ENCODE measurements at regions of chr16 and their contacts with region 1.

Region 1: DNA sequence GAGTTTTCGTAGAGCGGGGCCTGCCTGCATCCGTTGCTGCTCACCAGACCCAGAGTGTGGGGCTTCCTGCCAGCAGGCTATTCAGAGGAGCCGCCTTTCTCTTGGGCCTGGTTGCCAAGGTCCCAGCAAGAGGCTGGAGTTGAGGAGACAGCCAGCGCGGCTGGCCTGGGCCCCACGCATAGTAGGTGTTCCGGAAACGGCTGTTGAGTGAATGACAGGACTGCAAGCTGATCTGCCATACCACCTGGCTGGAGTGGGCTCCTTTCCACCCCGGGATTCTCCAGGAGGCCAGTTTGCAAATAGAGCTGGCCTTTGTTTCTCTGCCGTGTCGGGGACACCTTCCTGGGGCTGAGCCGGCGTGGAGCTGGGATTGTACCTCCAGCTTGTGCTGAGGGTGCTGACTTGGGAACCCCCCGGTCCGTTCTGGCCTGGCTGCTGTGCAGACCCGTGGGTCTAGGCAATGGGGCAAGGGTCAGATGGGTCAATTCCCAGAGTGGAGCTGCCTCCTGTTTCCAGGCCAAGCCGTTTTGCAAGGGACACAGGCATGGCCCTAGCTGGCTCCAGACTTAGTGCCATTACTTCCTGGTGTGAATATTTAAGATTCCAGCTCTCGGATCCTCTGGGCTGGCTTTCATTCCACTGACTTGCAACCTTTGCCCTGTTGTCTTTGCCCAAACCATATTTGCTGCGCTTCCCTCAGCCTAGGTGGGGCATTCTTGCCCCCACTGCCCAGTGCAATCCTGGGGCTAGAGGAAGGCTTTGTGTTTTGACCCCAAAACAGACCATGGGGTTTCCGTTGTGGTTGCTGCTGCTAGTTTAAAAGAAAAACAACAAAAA is 68.8 kb downstream of the CMIP start:
- DNase-seq: no peak
- ATAC-seq: no peak
- H3K4me3 ChIP-seq: no peak overlapping the region
- H3K4me3 Mint-ChIP-seq: no peak overlapping the region
- H3K27ac ChIP-seq: no peak overlapping the region
- H3K27ac Mint-ChIP-seq: peak overlapping the region; percentile 46
- H3K4me1 ChIP-seq: peaks cover 16% of the 10 kb centered on the region
- H3K4me1 Mint-ChIP-seq: no peaks in the 10 kb centered on the region
- H3K27me3 ChIP-seq: no peaks in the 10 kb centered on the region
- H3K27me3 Mint-ChIP-seq: no peaks in the 10 kb centered on the region
- CTCF ChIP-seq: no peak

Region 2: DNA sequence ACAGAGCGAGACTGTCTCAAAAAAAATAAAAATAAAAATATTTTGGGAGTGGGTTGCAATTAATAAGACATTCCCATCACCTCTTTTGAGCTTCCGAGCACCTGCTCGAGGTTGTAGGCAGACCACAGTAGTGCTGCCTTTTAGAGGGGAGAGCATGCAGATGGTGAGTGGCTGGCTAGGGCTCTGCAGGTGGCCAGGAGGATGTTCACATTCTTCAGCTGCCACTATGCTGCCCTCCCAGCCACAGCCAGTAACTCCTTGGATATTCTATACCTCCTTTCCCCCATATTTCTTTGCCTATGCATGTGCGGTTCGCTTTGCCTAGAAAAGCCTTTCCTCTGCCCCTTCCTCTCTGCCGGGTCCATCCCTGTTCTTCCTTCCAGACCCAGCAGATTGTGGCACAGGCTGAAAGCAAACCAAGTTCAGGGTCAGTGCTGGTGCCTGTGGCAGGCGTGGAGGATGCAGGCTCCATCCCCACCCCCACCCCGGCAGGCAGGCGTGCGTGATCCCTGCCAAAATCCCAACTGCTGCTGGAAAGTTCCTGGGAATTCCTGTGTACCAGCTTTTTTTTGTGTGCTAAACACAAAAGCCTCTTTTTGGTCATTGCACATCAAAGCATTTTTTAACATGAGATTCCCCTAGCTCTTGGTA is 102.7 kb before region 1 on chr16:
- CTCF ChIA-PET with region 1: no interaction called
- POLR2A ChIA-PET with region 1: no interaction called
- intact Hi-C with region 1: loop called in 1 of 2 experiments (anchors 5 kb)
- DNase-seq: no peak
- ATAC-seq: no peak
- H3K4me3 ChIP-seq: no peak overlapping the region
- H3K4me3 Mint-ChIP-seq: no peak overlapping the region
- H3K27ac ChIP-seq: no peak overlapping the region
- H3K27ac Mint-ChIP-seq: no peak overlapping the region
- H3K4me1 ChIP-seq: no peaks in the 10 kb centered on the region
- H3K4me1 Mint-ChIP-seq: peaks cover 6% of the 10 kb centered on the region
- H3K27me3 ChIP-seq: no peaks in the 10 kb centered on the region
- H3K27me3 Mint-ChIP-seq: no peaks in the 10 kb centered on the region
- CTCF ChIP-seq: no peak

Region 3: GRCh38 chr16:81558444-81559175 is 45.2 kb after region 1 on chr16:
- CTCF ChIA-PET with region 1: no interaction called
- POLR2A ChIA-PET with region 1: no interaction called
- intact Hi-C with region 1: no loop called
- DNase-seq: peak in 2 of 14 experiments; percentile 20 to 32
- ATAC-seq: no peak
- H3K4me3 ChIP-seq: no peak overlapping the region
- H3K4me3 Mint-ChIP-seq: no peak overlapping the region
- H3K27ac ChIP-seq: no peak overlapping the region
- H3K27ac Mint-ChIP-seq: no peak overlapping the region
- H3K4me1 ChIP-seq: no peaks in the 10 kb centered on the region
- H3K4me1 Mint-ChIP-seq: peaks cover 44% of the 10 kb centered on the region
- H3K27me3 ChIP-seq: no peaks in the 10 kb centered on the region
- H3K27me3 Mint-ChIP-seq: no peaks in the 10 kb centered on the region
- CTCF ChIP-seq: no peak

Measured in CD4-positive, alpha-beta T cell (primary cell).